Prostate gland (tissue), 2 donors: ENCODE measurements at regions of chr2 and their contacts with region 1.

Region 1: DNA sequence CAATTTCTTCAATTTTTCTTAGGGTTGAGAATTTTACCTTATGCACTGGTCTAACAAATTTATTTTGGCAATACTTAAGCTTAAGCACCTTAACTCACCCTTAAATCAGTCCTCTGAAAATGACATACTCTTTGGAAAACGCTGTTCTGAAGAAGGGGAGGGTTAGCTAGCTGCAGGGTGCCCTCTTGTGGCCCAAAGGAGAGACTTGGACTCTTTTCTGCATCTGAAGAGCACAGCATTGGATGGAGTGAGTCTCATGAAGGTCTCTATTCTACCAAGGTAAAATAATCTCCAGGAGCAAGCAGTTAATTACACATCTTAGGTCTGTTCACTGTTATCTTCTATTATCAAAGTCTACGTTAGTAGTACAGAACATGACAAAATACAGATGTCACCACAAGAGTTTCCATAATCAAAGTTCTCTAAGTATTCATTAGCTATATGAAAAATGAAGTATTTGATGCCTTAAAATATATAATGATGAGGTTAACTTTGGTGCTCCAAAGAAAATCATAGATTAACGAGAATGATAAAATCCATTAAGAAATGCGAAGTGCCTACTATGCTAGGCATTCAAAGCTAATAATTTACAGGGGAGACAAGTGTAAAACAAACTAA is 24.4 kb downstream of the PUM2 start:
- DNase-seq: peak; percentile 37
- H3K4me3 ChIP-seq: no peak overlapping the region
- H3K27ac ChIP-seq: no peak overlapping the region
- H3K4me1 ChIP-seq: peaks cover 11% of the 10 kb centered on the region
- H3K27me3 ChIP-seq: no peaks in the 10 kb centered on the region
- CTCF ChIP-seq: peak in 3 of 4 experiments; percentile 4 to 59 (median 47)
- POLR2A ChIP-seq: no peak

Region 2: GRCh38 chr2:19266838-19267237 is 1059.4 kb before region 1 on chr2:
- intact Hi-C with region 1: no loop called
- DNase-seq: no peak
- H3K4me3 ChIP-seq: no peak overlapping the region
- H3K27ac ChIP-seq: no peak overlapping the region
- H3K4me1 ChIP-seq: no peaks in the 10 kb centered on the region
- H3K27me3 ChIP-seq: no peaks in the 10 kb centered on the region
- CTCF ChIP-seq: no peak
- POLR2A ChIP-seq: no peak

Region 3: GRCh38 chr2:20135631-20136050 is 190.6 kb before region 1 on chr2:
- intact Hi-C with region 1: loop called (anchors 5 kb)
- DNase-seq: peak; percentile 68
- H3K4me3 ChIP-seq: no peak overlapping the region
- H3K27ac ChIP-seq: no peak overlapping the region
- H3K4me1 ChIP-seq: no peaks in the 10 kb centered on the region
- H3K27me3 ChIP-seq: no peaks in the 10 kb centered on the region
- CTCF ChIP-seq: peak; percentile 61 to 88 (median 74)
- POLR2A ChIP-seq: no peak

Region 4: GRCh38 chr2:20682167-20682920 is 356.1 kb after region 1 on chr2:
- intact Hi-C with region 1: no loop called
- DNase-seq: no peak
- H3K4me3 ChIP-seq: no peak overlapping the region
- H3K27ac ChIP-seq: no peak overlapping the region
- H3K4me1 ChIP-seq: no peaks in the 10 kb centered on the region
- H3K27me3 ChIP-seq: no peaks in the 10 kb centered on the region
- CTCF ChIP-seq: peak in 2 of 4 experiments; percentile 23 to 46
- POLR2A ChIP-seq: no peak